ENCODE measurements at regions of chr5 and their contacts with region 1.

Region 1: GRCh38 chr5:33241802-33242201 is 199.0 kb upstream of the TARS1 start:
- H3K4me3 Mint-ChIP-seq: peak overlapping the region; percentile 41
- H3K27ac Mint-ChIP-seq: peak overlapping the region; percentile 94
- H3K4me1 Mint-ChIP-seq: peaks cover 49% of the 10 kb centered on the region
- H3K27me3 Mint-ChIP-seq: no peaks in the 10 kb centered on the region

Region 2: DNA sequence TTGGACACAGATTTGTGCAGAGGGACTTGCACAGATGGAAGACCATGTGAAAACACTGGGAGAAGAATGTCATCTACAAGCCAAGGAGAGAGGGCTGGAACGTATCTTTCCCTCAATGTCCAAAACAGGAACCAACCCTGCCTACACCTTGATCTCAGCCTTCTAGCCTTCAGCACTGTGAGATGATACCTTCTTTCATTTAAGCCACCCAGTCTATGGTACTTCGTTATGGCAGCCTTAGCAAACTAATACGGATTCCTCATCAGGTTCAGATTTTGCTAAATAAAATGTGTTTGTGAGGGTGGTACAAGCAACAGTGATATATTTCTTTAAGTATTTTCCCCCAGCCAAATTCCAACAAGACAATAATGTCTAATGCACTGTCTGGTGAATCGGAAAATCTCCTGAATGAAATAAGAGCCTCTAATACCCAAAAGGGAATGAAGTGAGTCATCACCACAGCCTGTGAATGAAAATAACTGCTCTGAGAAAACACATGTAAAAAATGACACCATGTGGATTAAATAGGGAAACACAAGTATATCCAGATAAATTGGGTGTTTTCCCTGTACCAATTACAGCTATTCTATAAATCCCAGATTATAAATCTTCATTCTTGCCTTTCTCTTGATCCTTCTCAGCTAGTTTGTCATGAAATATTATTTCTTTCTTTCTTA is 16.1 kb after region 1 on chr5:
- intact Hi-C with region 1: loop called (anchors 2 kb)
- H3K4me3 Mint-ChIP-seq: no peak overlapping the region
- H3K27ac Mint-ChIP-seq: no peak overlapping the region
- H3K4me1 Mint-ChIP-seq: no peaks in the 10 kb centered on the region
- H3K27me3 Mint-ChIP-seq: peaks cover 3% of the 10 kb centered on the region

Region 3: DNA sequence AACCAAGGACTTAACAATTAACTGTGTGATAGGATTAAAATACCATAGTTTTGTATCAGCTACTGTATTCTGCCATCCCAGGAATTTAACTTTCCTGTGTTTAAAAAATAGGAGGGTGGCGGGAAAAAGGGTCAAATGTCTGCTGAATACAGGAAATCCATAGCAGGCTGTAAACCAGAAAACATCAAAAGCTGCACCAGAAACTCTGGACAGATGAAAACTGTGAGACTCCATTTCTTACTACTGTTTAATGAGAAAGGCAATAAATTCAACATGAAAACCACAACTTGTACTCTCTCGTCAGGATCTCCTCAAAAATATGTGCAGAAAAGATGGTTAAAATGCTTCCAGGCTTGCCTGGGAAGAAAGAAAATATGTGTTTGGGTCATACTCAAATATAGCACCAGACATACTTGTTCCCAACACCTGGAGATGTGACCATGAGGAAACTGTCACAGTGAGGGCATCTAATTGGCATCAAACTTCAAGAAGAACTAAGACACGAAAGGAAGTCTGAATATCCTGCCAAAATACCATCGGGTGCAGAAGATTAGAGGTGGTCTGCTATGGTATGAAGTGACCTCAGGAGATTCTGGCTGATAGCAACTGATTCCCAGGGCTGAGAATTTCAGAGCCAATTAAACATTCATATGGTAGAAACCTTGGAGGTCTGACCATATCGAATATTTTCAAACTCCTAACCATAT is 34.3 kb after region 1 on chr5:
- intact Hi-C with region 1: loop called (anchors 5 kb)
- H3K4me3 Mint-ChIP-seq: no peak overlapping the region
- H3K27ac Mint-ChIP-seq: peak overlapping the region; percentile 20
- H3K4me1 Mint-ChIP-seq: peaks cover 10% of the 10 kb centered on the region
- H3K27me3 Mint-ChIP-seq: no peaks in the 10 kb centered on the region

Region 4: GRCh38 chr5:33299621-33300208 is 57.9 kb after region 1 on chr5:
- intact Hi-C with region 1: loop called (anchors 5 kb)
- H3K4me3 Mint-ChIP-seq: peak overlapping the region; percentile 26
- H3K27ac Mint-ChIP-seq: peak overlapping the region; percentile 92
- H3K4me1 Mint-ChIP-seq: peaks cover 32% of the 10 kb centered on the region
- H3K27me3 Mint-ChIP-seq: peaks cover 4% of the 10 kb centered on the region

Region 5: GRCh38 chr5:33343676-33344327 is 102.0 kb after region 1 on chr5:
- intact Hi-C with region 1: no loop called
- H3K4me3 Mint-ChIP-seq: no peak overlapping the region
- H3K27ac Mint-ChIP-seq: no peak overlapping the region
- H3K4me1 Mint-ChIP-seq: no peaks in the 10 kb centered on the region
- H3K27me3 Mint-ChIP-seq: no peaks in the 10 kb centered on the region

Region 6: GRCh38 chr5:33439905-33440481 is 198.2 kb after region 1 on chr5:
- intact Hi-C with region 1: no loop called
- H3K4me3 Mint-ChIP-seq: no peak overlapping the region
- H3K27ac Mint-ChIP-seq: no peak overlapping the region
- H3K4me1 Mint-ChIP-seq: peaks cover 14% of the 10 kb centered on the region
- H3K27me3 Mint-ChIP-seq: no peaks in the 10 kb centered on the region

Measured in dendritic cell treated with granulocyte-macrophage colony-stimulating factor and Interleukin-4, amounts not matched to agents 40 ng/mL and 50 ng/mL, for 4 days (primary cell).